CD8-positive, alpha-beta T cell (primary cell): ENCODE measurements at regions of chr17 and their contacts with region 1.

Region 1: DNA sequence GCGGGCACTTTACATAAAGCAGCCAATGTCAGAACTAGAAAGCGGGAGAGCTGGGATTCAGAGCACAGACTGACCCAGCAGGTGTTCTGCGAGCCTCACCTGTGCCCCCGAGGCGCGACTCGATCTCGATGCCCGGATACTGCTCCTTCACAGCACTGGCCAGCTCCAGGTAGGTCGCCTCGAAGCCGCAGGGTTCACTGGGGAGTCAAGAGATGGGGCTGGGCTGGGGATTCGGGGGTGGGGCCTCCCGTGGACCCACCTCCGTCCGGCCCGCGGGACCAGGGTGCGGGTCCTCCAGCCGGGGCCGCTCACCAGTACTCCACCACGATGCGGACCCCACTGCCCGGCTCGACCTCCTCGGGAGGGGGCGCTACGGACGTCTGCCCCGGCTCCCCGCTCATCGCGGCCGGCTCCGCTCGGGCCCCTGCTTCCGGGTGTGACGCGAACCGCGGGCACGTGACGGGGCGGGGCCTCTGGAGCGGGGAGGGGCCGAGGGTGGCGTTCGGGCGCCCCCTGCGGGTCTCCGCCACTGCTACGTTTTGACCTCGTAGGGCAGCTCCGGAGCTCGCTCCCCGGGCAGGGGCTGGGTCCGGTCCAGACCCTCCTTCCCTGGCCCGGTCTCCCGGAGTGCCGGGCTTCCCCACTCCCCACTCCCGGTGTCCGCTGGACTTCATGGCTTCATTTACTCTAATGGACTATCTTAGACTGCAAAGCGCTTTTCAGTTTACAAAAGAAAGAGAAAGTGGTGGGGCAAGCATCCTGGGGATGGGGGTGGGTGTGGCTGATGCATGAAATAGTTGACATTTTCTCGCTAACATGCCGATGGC is at the start of gene MIEN1:
- DNase-seq: peak; percentile 89 to 99 (median 95)
- ATAC-seq: peak; percentile 93
- H3K4me3 ChIP-seq: peak within 1 kb of the TSS; percentile 64 to 72
- H3K4me3 Mint-ChIP-seq: peak within 1 kb of the TSS; percentile 90
- H3K27ac ChIP-seq: peak within 1 kb of the TSS; percentile 78 to 91
- H3K27ac Mint-ChIP-seq: peak within 1 kb of the TSS; percentile 94
- H3K4me1 ChIP-seq: peaks cover 17% of the 10 kb centered on the region
- H3K4me1 Mint-ChIP-seq: peaks cover 17% of the 10 kb centered on the region
- H3K27me3 ChIP-seq: no peaks in the 10 kb centered on the region
- H3K27me3 Mint-ChIP-seq: no peaks in the 10 kb centered on the region
- CTCF ChIP-seq: peak; percentile 98
- total RNA-seq, gene MIEN1: 29.5 to 30.1 TPM

Region 2: GRCh38 chr17:39636927-39637736 is 93.2 kb before region 1 on chr17 and contains the start of gene STARD3:
- CTCF ChIA-PET with region 1: interaction called, 5 read pairs
- POLR2A ChIA-PET with region 1: interaction called, 4 read pairs
- intact Hi-C with region 1: loop called (anchors 1 to 5 kb)
- DNase-seq: peak; percentile 78 to 95 (median 92)
- ATAC-seq: peak; percentile 85
- H3K4me3 ChIP-seq: peak within 1 kb of the TSS; percentile 85 to 97
- H3K4me3 Mint-ChIP-seq: peak within 1 kb of the TSS; percentile 93
- H3K27ac ChIP-seq: peak within 1 kb of the TSS; percentile 86 to 94
- H3K27ac Mint-ChIP-seq: peak within 1 kb of the TSS; percentile 97
- H3K4me1 ChIP-seq: peaks cover 47% of the 10 kb centered on the region
- H3K4me1 Mint-ChIP-seq: peaks cover 64% of the 10 kb centered on the region
- H3K27me3 ChIP-seq: no peaks in the 10 kb centered on the region
- H3K27me3 Mint-ChIP-seq: no peaks in the 10 kb centered on the region
- CTCF ChIP-seq: no peak
- total RNA-seq, gene STARD3: 102 to 118 TPM

Region 3: GRCh38 chr17:39668199-39668966 is 61.9 kb before region 1 on chr17 and contains the start of gene PNMT:
- CTCF ChIA-PET with region 1: interaction called, 14 read pairs
- POLR2A ChIA-PET with region 1: interaction called, 4 read pairs
- intact Hi-C with region 1: no loop called
- DNase-seq: peak; percentile 37 to 84 (median 68)
- ATAC-seq: peak; percentile 79
- H3K4me3 ChIP-seq: peak within 1 kb of the TSS; percentile 29 to 50
- H3K4me3 Mint-ChIP-seq: peak within 1 kb of the TSS; percentile 79
- H3K27ac ChIP-seq: no peak within 1 kb of the TSS
- H3K27ac Mint-ChIP-seq: no peak within 1 kb of the TSS
- H3K4me1 ChIP-seq: peaks cover 26% of the 10 kb centered on the region
- H3K4me1 Mint-ChIP-seq: peaks cover 25% of the 10 kb centered on the region
- H3K27me3 ChIP-seq: peaks cover 0 to 2% of the 10 kb centered on the region in 2 experiments
- H3K27me3 Mint-ChIP-seq: peaks cover 12% of the 10 kb centered on the region
- CTCF ChIP-seq: peak; percentile 72
- total RNA-seq, gene PNMT: 0.43 TPM in 1 of 2 experiments, not detected in the other

Region 4: DNA sequence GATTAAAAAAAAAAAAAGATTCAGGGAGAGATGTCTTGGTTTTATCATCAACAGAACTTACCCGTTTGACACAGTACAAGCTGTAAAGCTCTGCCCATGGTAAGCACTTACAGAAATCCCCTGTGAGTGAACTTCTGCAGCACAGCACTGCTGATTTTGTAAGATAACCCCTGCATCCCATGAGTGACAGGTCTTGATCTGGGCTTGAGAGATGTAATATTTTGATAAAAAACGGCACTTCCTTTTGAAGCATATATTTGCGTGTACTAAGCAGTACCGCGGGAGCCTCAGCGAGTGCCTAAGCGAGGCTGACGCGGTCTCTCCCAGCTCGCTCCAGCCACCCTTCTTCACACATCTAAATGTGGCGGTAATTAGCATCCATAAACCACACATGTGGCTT is 83.3 kb after region 1 on chr17:
- CTCF ChIA-PET with region 1: interaction called, 5 read pairs
- POLR2A ChIA-PET with region 1: no interaction called
- intact Hi-C with region 1: loop called in 1 of 2 experiments (anchors 1 kb)
- DNase-seq: peak; percentile 27 to 96 (median 69)
- ATAC-seq: peak; percentile 94
- H3K4me3 ChIP-seq: peak overlapping the region; percentile 18 to 41
- H3K4me3 Mint-ChIP-seq: peak overlapping the region; percentile 75
- H3K27ac ChIP-seq: peak overlapping the region; percentile 62 to 75
- H3K27ac Mint-ChIP-seq: peak overlapping the region; percentile 94
- H3K4me1 ChIP-seq: peaks cover 62% of the 10 kb centered on the region
- H3K4me1 Mint-ChIP-seq: peaks cover 74% of the 10 kb centered on the region
- H3K27me3 ChIP-seq: no peaks in the 10 kb centered on the region
- H3K27me3 Mint-ChIP-seq: no peaks in the 10 kb centered on the region
- CTCF ChIP-seq: no peak

Region 5: DNA sequence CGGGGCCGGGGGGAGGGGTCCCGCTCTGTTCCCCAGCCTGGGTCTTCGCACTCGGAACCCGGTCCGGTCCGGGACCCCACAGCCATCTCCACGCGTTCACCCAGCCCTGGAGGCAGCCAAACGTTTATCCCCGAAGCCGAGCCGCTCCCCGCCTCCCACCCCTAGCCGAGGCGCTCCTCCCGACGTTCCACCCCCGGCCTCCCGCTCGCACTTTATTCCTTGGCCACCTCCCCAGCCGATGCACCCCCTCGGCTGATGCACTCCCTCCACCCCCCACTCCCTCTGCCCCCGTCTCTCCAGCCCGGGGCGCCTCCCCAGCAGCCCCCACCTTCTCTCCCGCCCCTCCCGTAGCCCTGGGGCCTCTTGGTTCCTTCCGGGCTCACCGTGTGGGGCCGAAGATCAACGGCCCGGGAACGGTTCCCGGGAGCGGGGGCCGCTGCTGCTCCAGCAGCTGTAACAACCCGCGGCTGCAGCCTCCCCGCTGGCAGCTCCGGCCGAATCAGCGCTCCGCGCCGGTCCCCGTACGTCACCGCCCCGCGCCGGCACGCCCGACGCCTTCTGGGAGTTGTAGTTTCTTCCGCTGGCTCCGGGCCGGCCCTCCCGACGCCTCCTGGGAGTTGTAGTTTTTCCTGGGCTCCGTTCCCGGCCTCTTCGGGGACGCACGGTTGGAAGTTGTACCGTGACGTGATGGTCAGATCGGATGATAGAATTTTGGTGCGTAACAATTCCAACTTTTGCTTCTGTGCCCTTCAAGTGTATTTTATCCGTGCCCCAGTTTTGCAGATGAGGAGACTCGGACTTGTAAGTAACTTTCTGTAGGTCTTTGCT is 197.0 kb after region 1 on chr17 and contains the starts of genes LRRC3C and ORMDL3:
- CTCF ChIA-PET with region 1: interaction called, 3 read pairs
- POLR2A ChIA-PET with region 1: interaction called, 17 read pairs
- intact Hi-C with region 1: loop called (anchors 1 to 2 kb)
- DNase-seq: peak; percentile 80 to 96 (median 91)
- ATAC-seq: peak; percentile 70
- H3K4me3 ChIP-seq: peak within 1 kb of the TSS; percentile 87 to 90
- H3K4me3 Mint-ChIP-seq: peak within 1 kb of the TSS; percentile 96
- H3K27ac ChIP-seq: peak within 1 kb of the TSS; percentile 70 to 71
- H3K27ac Mint-ChIP-seq: peak within 1 kb of the TSS; percentile 91
- H3K4me1 ChIP-seq: peaks cover 50% of the 10 kb centered on the region
- H3K4me1 Mint-ChIP-seq: peaks cover 42% of the 10 kb centered on the region
- H3K27me3 ChIP-seq: no peaks in the 10 kb centered on the region
- H3K27me3 Mint-ChIP-seq: no peaks in the 10 kb centered on the region
- CTCF ChIP-seq: no peak
- total RNA-seq, gene LRRC3C: not detected
- total RNA-seq, gene ORMDL3: 136 to 140 TPM